ENCODE measurements at regions of chr1 and their contacts with region 1.

Region 1: GRCh38 chr1:160768295-160768657 is 27.7 kb upstream of the LY9 start:
- DNase-seq: peak; percentile 73 to 92 (median 82)
- H3K4me3 ChIP-seq: peak overlapping the region; percentile 69
- H3K4me3 Mint-ChIP-seq: peak overlapping the region; percentile 87 to 91 (median 88)
- H3K27ac ChIP-seq: peak overlapping the region; percentile 55
- H3K27ac Mint-ChIP-seq: peak overlapping the region; percentile 94 to 99 (median 98)
- H3K4me1 ChIP-seq: peaks cover 19% of the 10 kb centered on the region
- H3K4me1 Mint-ChIP-seq: peaks cover 22 to 23% (median 23%) of the 10 kb centered on the region in 3 donors
- H3K27me3 ChIP-seq: no peaks in the 10 kb centered on the region
- H3K27me3 Mint-ChIP-seq: peaks cover 0 to 3% of the 10 kb centered on the region in 2 donors

Region 2: DNA sequence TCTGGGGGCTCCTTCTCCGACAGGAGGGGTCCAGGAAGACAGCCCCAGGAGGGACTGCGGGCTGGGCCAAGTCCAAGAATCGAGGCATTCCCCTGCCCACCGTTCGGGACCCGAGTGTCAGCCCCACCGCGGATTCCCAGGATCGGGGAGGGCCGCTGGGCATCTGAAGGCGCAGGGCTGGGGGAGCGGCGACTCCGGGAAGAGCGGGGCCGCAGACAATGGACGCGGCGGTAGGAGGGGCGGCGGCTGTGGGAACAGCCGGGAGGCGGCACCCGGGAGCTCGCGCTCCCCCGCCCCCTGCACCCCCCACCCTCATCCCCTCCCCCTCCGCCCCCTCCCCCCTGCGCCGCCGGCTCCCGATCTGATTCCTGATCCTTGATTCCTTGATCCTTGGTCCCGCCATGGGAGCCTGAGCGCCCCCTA is 368.0 kb before region 1 on chr1 and contains the start of gene VANGL2:
- CTCF ChIA-PET with region 1: no interaction called
- POLR2A ChIA-PET with region 1: no interaction called
- DNase-seq: peak; percentile 18 to 59 (median 25)
- H3K4me3 ChIP-seq: peak within 1 kb of the TSS; percentile 34
- H3K4me3 Mint-ChIP-seq: peak within 1 kb of the TSS; percentile 15 to 88 (median 65)
- H3K27ac ChIP-seq: no peak within 1 kb of the TSS
- H3K27ac Mint-ChIP-seq: peak within 1 kb of the TSS in 1 of 8 donors; percentile 43
- H3K4me1 ChIP-seq: peaks cover 5% of the 10 kb centered on the region
- H3K4me1 Mint-ChIP-seq: peaks cover 6% of the 10 kb centered on the region in 3 donors
- H3K27me3 ChIP-seq: peaks cover 16% of the 10 kb centered on the region
- H3K27me3 Mint-ChIP-seq: peaks cover 19 to 39% of the 10 kb centered on the region in 2 donors
- total RNA-seq, gene VANGL2: 0.04 to 0.07 TPM

Region 3: GRCh38 chr1:160618763-160619274 is 149.5 kb before region 1 on chr1:
- CTCF ChIA-PET with region 1: interaction called, 10 read pairs
- POLR2A ChIA-PET with region 1: no interaction called
- DNase-seq: peak in 4 of 5 donors; percentile 21 to 63 (median 44)
- H3K4me3 ChIP-seq: no peak overlapping the region
- H3K4me3 Mint-ChIP-seq: peak overlapping the region in 1 of 7 donors; percentile 1
- H3K27ac ChIP-seq: no peak overlapping the region
- H3K27ac Mint-ChIP-seq: peak overlapping the region; percentile 3 to 91 (median 63)
- H3K4me1 ChIP-seq: peaks cover 37% of the 10 kb centered on the region
- H3K4me1 Mint-ChIP-seq: peaks cover 62 to 86% (median 75%) of the 10 kb centered on the region in 3 donors
- H3K27me3 ChIP-seq: no peaks in the 10 kb centered on the region
- H3K27me3 Mint-ChIP-seq: no peaks in the 10 kb centered on the region

Region 4: DNA sequence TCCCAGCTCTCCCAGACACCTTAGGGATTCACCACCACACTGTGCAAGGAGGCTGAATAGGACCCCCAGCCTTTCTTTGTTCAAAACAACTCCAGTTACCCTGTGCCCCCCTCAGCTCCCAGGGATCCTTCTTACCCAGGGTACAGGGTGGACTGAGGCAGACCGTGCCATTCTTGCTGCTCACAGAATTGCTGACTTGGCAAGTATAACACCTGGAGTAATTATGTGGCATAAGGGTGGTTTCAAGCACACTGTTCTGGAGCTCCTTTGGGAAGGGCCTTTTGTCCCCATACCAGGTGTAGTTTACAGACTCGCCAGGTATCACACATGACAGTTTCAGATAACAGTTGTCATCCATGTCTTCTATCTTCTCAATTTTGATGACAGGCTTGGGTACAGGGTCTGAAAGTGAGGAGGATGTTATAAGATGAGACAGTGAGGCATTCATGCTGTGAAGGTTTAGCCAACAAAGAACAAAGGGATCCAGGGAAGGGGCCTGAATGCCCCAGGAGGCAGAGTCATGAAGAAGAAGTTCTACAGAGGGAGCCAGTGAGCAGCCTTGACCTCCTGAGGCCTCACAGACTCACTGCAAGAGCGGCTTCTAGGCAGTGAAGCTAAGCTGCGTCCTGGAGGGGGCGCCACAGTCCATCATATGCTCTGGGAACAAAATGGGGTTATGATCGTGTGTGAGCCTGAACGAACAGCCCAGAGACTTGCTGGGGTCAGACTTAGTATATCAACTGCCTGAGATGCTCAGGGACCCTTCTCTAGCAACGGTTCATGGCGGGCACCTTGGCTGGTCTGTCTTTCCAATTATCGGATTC is 87.0 kb before region 1 on chr1:
- CTCF ChIA-PET with region 1: interaction called, 100 read pairs
- POLR2A ChIA-PET with region 1: no interaction called
- DNase-seq: peak; percentile 77 to 90 (median 81)
- H3K4me3 ChIP-seq: no peak overlapping the region
- H3K4me3 Mint-ChIP-seq: peak overlapping the region in 4 of 7 donors; percentile 2 to 80 (median 6)
- H3K27ac ChIP-seq: no peak overlapping the region
- H3K27ac Mint-ChIP-seq: peak overlapping the region; percentile 87 to 98 (median 94)
- H3K4me1 ChIP-seq: peaks cover 56% of the 10 kb centered on the region
- H3K4me1 Mint-ChIP-seq: peaks cover 58 to 72% (median 72%) of the 10 kb centered on the region in 3 donors
- H3K27me3 ChIP-seq: no peaks in the 10 kb centered on the region
- H3K27me3 Mint-ChIP-seq: no peaks in the 10 kb centered on the region

Region 5: DNA sequence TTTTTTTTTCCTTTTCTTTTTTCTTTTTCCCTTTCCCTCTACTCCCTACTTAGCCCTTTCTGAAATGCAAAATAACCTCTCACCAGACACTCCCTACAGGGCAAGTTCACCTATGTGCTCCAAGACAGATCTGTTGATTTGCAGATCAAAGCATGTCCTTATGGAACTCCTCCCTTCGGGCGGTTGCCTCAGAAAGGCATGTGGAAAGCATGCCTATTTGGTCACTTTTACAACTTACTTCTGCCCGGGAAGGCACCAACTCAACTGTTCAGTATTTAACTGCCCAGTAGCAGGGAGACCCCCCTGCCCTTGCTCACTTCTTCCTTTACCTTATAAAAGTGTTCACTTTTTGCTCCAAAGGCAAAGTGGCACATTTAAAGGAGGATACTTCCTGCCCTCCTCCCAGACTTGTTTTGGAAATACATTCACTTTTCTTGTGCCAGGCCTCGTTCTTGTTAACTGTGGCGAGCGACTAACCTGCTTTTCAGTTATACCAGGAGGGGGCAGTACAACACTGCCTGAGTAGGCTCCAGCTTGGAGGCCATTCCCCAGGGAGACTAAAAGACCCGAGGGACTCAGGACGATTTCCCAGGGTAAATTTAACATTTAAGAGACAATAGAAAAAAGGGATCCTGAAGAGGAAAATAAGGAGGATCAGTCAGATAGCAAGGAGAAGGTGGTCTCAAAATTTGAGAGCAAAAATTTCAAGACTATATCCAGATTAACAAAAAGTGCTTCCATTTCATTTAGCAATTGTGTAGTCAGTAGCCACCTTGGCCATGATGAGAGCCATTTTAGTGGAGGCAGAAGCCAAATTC is 41.6 kb before region 1 on chr1:
- CTCF ChIA-PET with region 1: interaction called, 185 read pairs
- POLR2A ChIA-PET with region 1: interaction called, 7 read pairs
- DNase-seq: peak in 4 of 5 donors; percentile 58 to 82 (median 75)
- H3K4me3 ChIP-seq: no peak overlapping the region
- H3K4me3 Mint-ChIP-seq: no peak overlapping the region
- H3K27ac ChIP-seq: no peak overlapping the region
- H3K27ac Mint-ChIP-seq: no peak overlapping the region
- H3K4me1 ChIP-seq: peaks cover 21% of the 10 kb centered on the region
- H3K4me1 Mint-ChIP-seq: peaks cover 20 to 21% (median 20%) of the 10 kb centered on the region in 3 donors
- H3K27me3 ChIP-seq: no peaks in the 10 kb centered on the region
- H3K27me3 Mint-ChIP-seq: no peaks in the 10 kb centered on the region

Region 6: GRCh38 chr1:160739098-160739511 is 29.2 kb before region 1 on chr1 and contains the start of gene SLAMF7:
- CTCF ChIA-PET with region 1: interaction called, 66 read pairs
- POLR2A ChIA-PET with region 1: interaction called, 9 read pairs
- DNase-seq: peak in 4 of 5 donors; percentile 31 to 75 (median 46)
- H3K4me3 ChIP-seq: peak within 1 kb of the TSS; percentile 63
- H3K4me3 Mint-ChIP-seq: peak within 1 kb of the TSS; percentile 89 to 98 (median 94)
- H3K27ac ChIP-seq: peak within 1 kb of the TSS; percentile 54
- H3K27ac Mint-ChIP-seq: peak within 1 kb of the TSS; percentile 88 to 98 (median 94)
- H3K4me1 ChIP-seq: peaks cover 37% of the 10 kb centered on the region
- H3K4me1 Mint-ChIP-seq: peaks cover 69 to 73% (median 69%) of the 10 kb centered on the region in 3 donors
- H3K27me3 ChIP-seq: no peaks in the 10 kb centered on the region
- H3K27me3 Mint-ChIP-seq: no peaks in the 10 kb centered on the region
- total RNA-seq, gene SLAMF7: 79.5 to 97.4 TPM

Region 7: GRCh38 chr1:160755911-160756848 is 12.1 kb before region 1 on chr1:
- CTCF ChIA-PET with region 1: interaction called, 32 read pairs
- POLR2A ChIA-PET with region 1: interaction called, 14 read pairs
- DNase-seq: peak in 4 of 5 donors; percentile 28 to 76 (median 54)
- H3K4me3 ChIP-seq: no peak overlapping the region
- H3K4me3 Mint-ChIP-seq: peak overlapping the region; percentile 29 to 86 (median 71)
- H3K27ac ChIP-seq: peak overlapping the region; percentile 33
- H3K27ac Mint-ChIP-seq: peak overlapping the region; percentile 88 to 98 (median 95)
- H3K4me1 ChIP-seq: peaks cover 51% of the 10 kb centered on the region
- H3K4me1 Mint-ChIP-seq: peaks cover 71 to 87% (median 81%) of the 10 kb centered on the region in 3 donors
- H3K27me3 ChIP-seq: no peaks in the 10 kb centered on the region
- H3K27me3 Mint-ChIP-seq: peaks cover 0 to 4% of the 10 kb centered on the region in 2 donors

Region 8: GRCh38 chr1:161351482-161351881 is 583.2 kb after region 1 on chr1:
- CTCF ChIA-PET with region 1: no interaction called
- POLR2A ChIA-PET with region 1: no interaction called
- DNase-seq: no peak
- H3K4me3 ChIP-seq: no peak overlapping the region
- H3K4me3 Mint-ChIP-seq: no peak overlapping the region
- H3K27ac ChIP-seq: no peak overlapping the region
- H3K27ac Mint-ChIP-seq: no peak overlapping the region
- H3K4me1 ChIP-seq: no peaks in the 10 kb centered on the region
- H3K4me1 Mint-ChIP-seq: peaks cover 7 to 25% (median 7%) of the 10 kb centered on the region in 3 donors
- H3K27me3 ChIP-seq: no peaks in the 10 kb centered on the region
- H3K27me3 Mint-ChIP-seq: no peaks in the 10 kb centered on the region

Measured in CD8-positive, alpha-beta memory T cell (primary cell).